K562 (cell line): ENCODE measurements at regions of chr18 and their contacts with region 1.

Region 1: GRCh38 chr18:75478996-75479880 is 51.7 kb upstream of the SMIM21 start:
- DNase-seq: peak; percentile 11 to 28 (median 20)
- ATAC-seq: peak; percentile 72; the same call in 2 of the 3 replicates
- H3K4me3 ChIP-seq: no peak overlapping the region
- H3K27ac ChIP-seq: no peak overlapping the region
- H3K4me1 ChIP-seq: no peaks in the 10 kb centered on the region
- H3K27me3 ChIP-seq: no peaks in the 10 kb centered on the region
- CTCF ChIP-seq: peak; percentile 14 to 60 (median 37); a peak in 4 of 6 replicates
- EP300 ChIP-seq: no peak
- POLR2A ChIP-seq: no peak
- RAD21 ChIP-seq: peak; percentile 48 to 57

Region 2: GRCh38 chr18:74896390-74896991 is 582.7 kb before region 1 on chr18:
- CTCF ChIA-PET with region 1: no interaction called
- POLR2A ChIA-PET with region 1: no interaction called
- in situ Hi-C with region 1: no loop called
- intact Hi-C with region 1: loop called (anchors 10 kb)
- DNase-seq: peak in 2 of 4 experiments; percentile 10 to 30
- ATAC-seq: peak; percentile 83
- H3K4me3 ChIP-seq: no peak overlapping the region
- H3K27ac ChIP-seq: no peak overlapping the region
- H3K4me1 ChIP-seq: peaks cover 0 to 3% of the 10 kb centered on the region in 2 experiments; a peak in 1 of 5 replicates
- H3K27me3 ChIP-seq: no peaks in the 10 kb centered on the region
- CTCF ChIP-seq: peak; percentile 34 to 52 (median 41); a peak in 5 of 6 replicates
- EP300 ChIP-seq: no peak
- POLR2A ChIP-seq: no peak
- RAD21 ChIP-seq: peak; percentile 26 to 36; a peak in 3 of 4 replicates

Region 3: GRCh38 chr18:75161256-75162028 is 317.8 kb before region 1 on chr18:
- CTCF ChIA-PET with region 1: no interaction called
- POLR2A ChIA-PET with region 1: no interaction called
- in situ Hi-C with region 1: no loop called
- intact Hi-C with region 1: loop called (anchors 10 kb)
- DNase-seq: peak in 2 of 4 experiments; percentile 24 to 46
- ATAC-seq: peak; percentile 83
- H3K4me3 ChIP-seq: peak overlapping the region; percentile 35
- H3K27ac ChIP-seq: no peak overlapping the region
- H3K4me1 ChIP-seq: peaks cover 0 to 7% of the 10 kb centered on the region in 2 experiments; a peak in 1 of 5 replicates
- H3K27me3 ChIP-seq: peaks cover 20 to 69% of the 10 kb centered on the region in 2 experiments
- CTCF ChIP-seq: peak in 2 of 3 experiments; percentile 12 to 17; a peak in 1 of 6 replicates
- EP300 ChIP-seq: no peak
- POLR2A ChIP-seq: no peak
- RAD21 ChIP-seq: no peak; a peak in 2 of 4 replicates